Endothelial cell of umbilical vein (primary cell): ENCODE measurements at regions of chr22 and their contacts with region 1.

Region 1: GRCh38 chr22:50498322-50498890 is 9.1 kb downstream of the LMF2 start:
- DNase-seq: peak; percentile 65
- H3K4me3 ChIP-seq: no peak overlapping the region
- H3K27ac ChIP-seq: no peak overlapping the region
- H3K4me1 ChIP-seq: no peaks in the 10 kb centered on the region
- H3K27me3 ChIP-seq: no peaks in the 10 kb centered on the region
- CTCF ChIP-seq: peak; percentile 64 to 71
- POLR2A ChIP-seq: no peak

Region 2: GRCh38 chr22:50399751-50400331 is 98.6 kb before region 1 on chr22:
- CTCF ChIA-PET with region 1: interaction called, 5 read pairs
- POLR2A ChIA-PET with region 1: no interaction called
- dilution Hi-C with region 1: no loop called
- intact Hi-C with region 1: loop called (anchors 5 kb)
- DNase-seq: no peak
- H3K4me3 ChIP-seq: no peak overlapping the region
- H3K27ac ChIP-seq: no peak overlapping the region
- H3K4me1 ChIP-seq: peaks cover 30% of the 10 kb centered on the region
- H3K27me3 ChIP-seq: no peaks in the 10 kb centered on the region
- CTCF ChIP-seq: peak; percentile 32 to 55
- POLR2A ChIP-seq: no peak

Region 3: DNA sequence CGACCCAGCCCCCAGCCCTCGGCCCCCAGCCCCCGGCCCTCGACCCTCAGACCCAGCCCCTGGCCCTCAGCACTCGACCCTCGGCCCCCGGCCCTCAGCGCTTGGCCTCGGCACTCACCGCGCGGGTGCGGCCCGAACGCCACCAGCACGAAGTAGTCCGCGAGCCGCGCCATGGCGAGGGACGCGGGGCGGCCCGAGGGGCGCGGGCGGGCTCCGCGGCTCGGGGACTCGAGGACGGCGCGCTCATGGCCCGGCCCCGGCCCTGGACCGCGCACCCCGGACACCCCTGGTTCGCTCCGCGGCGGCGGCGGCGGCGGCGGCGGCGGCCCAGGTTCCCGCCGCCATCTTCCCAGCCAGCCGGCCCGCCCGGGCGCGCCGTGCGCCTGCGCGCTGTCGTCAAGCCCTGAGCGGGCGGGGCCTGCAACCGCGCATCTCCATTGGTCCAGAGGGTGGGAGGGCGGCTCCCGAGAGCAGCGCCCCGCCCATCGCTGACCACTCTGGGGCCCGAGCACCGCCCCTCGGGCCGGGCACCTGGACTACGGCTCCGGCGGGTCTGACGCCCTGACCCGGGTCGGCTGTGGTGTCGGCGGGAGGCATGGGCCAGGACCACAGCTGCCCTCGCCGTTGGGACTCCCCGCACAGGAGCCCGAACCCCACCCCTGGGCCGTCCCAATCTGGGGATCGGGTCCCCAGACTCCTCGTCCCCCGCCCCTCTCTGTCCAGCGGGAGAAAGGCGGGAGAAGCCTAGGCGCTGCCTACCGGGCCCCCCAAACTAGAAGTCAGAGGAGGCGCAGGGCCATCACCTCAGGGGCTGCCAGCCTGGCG is 23.5 kb before region 1 on chr22 and contains the start of gene SBF1:
- CTCF ChIA-PET with region 1: interaction called, 8 read pairs
- POLR2A ChIA-PET with region 1: interaction called, 5 read pairs
- dilution Hi-C with region 1: no loop called
- intact Hi-C with region 1: loop called (anchors 2 kb)
- DNase-seq: peak; percentile 89
- H3K4me3 ChIP-seq: peak within 1 kb of the TSS; percentile 54 to 77 (median 58)
- H3K27ac ChIP-seq: peak within 1 kb of the TSS; percentile 24
- H3K4me1 ChIP-seq: peaks cover 15% of the 10 kb centered on the region
- H3K27me3 ChIP-seq: peaks cover 3% of the 10 kb centered on the region in 2 experiments
- CTCF ChIP-seq: no peak
- POLR2A ChIP-seq: no peak
- total RNA-seq, gene SBF1: 67.2 and 68.6 TPM in 2 replicates

Region 4: GRCh38 chr22:50485201-50486131 is 12.9 kb before region 1 on chr22:
- CTCF ChIA-PET with region 1: interaction called, 17 read pairs
- POLR2A ChIA-PET with region 1: no interaction called
- dilution Hi-C with region 1: no loop called
- intact Hi-C with region 1: no loop called
- DNase-seq: no peak
- H3K4me3 ChIP-seq: no peak overlapping the region
- H3K27ac ChIP-seq: no peak overlapping the region
- H3K4me1 ChIP-seq: no peaks in the 10 kb centered on the region
- H3K27me3 ChIP-seq: peaks cover under 1 to 14% of the 10 kb centered on the region in 2 experiments
- CTCF ChIP-seq: no peak
- POLR2A ChIP-seq: no peak